Sigmoid colon (tissue), 7 donors: ENCODE measurements at regions of chr22 and their contacts with region 1.

Region 1: DNA sequence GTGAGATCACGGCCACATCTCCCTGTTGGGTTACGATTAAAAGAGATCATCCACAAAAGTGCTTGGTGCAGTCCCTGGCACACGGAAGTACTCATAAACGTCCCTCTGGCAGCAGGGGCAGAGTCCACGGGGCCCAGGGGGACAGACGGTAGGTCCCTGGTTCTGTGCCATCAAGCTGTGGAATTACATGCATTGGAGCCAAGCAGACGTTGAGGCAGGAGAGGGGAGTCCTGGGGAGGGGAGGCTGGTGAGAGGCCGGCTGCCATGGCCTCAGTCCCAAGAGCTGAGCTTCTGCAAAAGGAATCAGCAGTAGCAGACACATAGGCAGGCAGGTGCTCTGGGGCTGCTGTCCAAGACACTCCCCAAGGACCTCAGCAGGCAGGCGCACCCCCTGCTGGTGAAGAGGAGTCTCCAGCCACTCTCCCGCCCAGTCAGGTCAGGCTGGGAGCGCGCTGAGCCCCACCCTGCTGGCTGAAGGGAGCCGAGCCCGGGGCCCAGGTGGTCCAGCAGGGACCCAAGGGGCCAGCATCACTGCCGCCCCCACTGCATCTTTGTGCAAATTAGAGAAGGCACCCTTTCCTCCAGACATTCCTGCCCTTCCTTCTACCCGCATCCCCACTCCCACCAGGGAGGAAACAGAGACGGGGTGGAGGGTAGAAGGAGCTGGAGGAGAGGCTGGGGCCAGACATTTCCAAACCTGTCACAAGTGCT is 7.6 kb upstream of the KCTD17 start:
- DNase-seq: no peak
- H3K4me3 ChIP-seq: no peak overlapping the region
- H3K27ac ChIP-seq: no peak overlapping the region
- H3K4me1 ChIP-seq: no peaks in the 10 kb centered on the region
- H3K27me3 ChIP-seq: peaks cover 0 to 5% (median 0%) of the 10 kb centered on the region in 3 donors
- CTCF ChIP-seq: peak in 3 of 4 experiments; percentile 21 to 54 (median 48)
- EP300 ChIP-seq: no peak
- POLR2A ChIP-seq: no peak

Region 2: GRCh38 chr22:36781656-36782627 is 262.0 kb before region 1 on chr22:
- intact Hi-C with region 1: loop called (anchors 10 kb)
- DNase-seq: peak; percentile 87
- H3K4me3 ChIP-seq: no peak overlapping the region
- H3K27ac ChIP-seq: peak overlapping the region; percentile 32 to 54 (median 46)
- H3K4me1 ChIP-seq: peaks cover 0 to 11% (median 8%) of the 10 kb centered on the region in 4 donors
- H3K27me3 ChIP-seq: no peaks in the 10 kb centered on the region
- CTCF ChIP-seq: peak; percentile 71 to 95 (median 87)
- EP300 ChIP-seq: no peak
- POLR2A ChIP-seq: no peak

Region 3: GRCh38 chr22:37098976-37099591 is 55.1 kb after region 1 on chr22:
- intact Hi-C with region 1: no loop called
- DNase-seq: no peak
- H3K4me3 ChIP-seq: no peak overlapping the region
- H3K27ac ChIP-seq: no peak overlapping the region
- H3K4me1 ChIP-seq: no peaks in the 10 kb centered on the region
- H3K27me3 ChIP-seq: peaks cover 0 to 44% (median 17%) of the 10 kb centered on the region in 3 donors
- CTCF ChIP-seq: no peak
- EP300 ChIP-seq: no peak
- POLR2A ChIP-seq: no peak